Vagina (tissue), 2 donors: ENCODE measurements at regions of chr11 and their contacts with region 1.

Region 1: GRCh38 chr11:69088676-69089146 is 40.0 kb downstream of the TPCN2 start:
- DNase-seq: no peak
- H3K4me3 ChIP-seq: no peak overlapping the region
- H3K27ac ChIP-seq: no peak overlapping the region
- H3K4me1 ChIP-seq: peaks cover 6% of the 10 kb centered on the region
- H3K27me3 ChIP-seq: no peaks in the 10 kb centered on the region
- CTCF ChIP-seq: peak; percentile 37 to 86 (median 73)
- POLR2A ChIP-seq: no peak

Region 2: DNA sequence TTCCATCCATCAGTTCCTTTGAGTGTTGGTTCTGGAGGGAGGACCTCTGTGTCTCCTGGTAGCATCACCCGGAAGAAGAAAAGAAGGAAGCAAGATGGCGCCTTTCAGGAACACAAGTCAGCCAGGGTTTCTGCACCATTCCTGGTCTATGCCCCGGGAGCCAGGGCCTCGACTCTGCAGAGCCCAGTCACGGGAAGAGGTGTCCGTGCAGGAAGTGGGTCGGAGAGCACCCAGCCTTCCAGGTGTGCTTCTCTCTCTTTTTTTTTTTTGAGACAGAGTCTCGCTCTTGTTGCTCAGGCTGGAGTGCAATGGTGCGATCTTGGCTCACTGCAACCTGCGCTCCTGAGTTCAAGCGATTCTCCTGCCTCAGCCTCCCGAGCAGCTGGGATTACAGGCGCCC is 206.3 kb before region 1 on chr11:
- intact Hi-C with region 1: no loop called
- DNase-seq: no peak
- H3K4me3 ChIP-seq: no peak overlapping the region
- H3K27ac ChIP-seq: no peak overlapping the region
- H3K4me1 ChIP-seq: no peaks in the 10 kb centered on the region
- H3K27me3 ChIP-seq: no peaks in the 10 kb centered on the region
- CTCF ChIP-seq: no peak
- POLR2A ChIP-seq: no peak

Region 3: GRCh38 chr11:68903288-68904247 is 185.1 kb before region 1 on chr11 and contains the starts of genes IGHMBP2 and MRPL21:
- intact Hi-C with region 1: loop called (anchors 1 kb)
- DNase-seq: no peak
- H3K4me3 ChIP-seq: peak within 1 kb of the TSS; percentile 72 to 80
- H3K27ac ChIP-seq: peak within 1 kb of the TSS; percentile 87
- H3K4me1 ChIP-seq: peaks cover 38% of the 10 kb centered on the region
- H3K27me3 ChIP-seq: no peaks in the 10 kb centered on the region
- CTCF ChIP-seq: no peak
- POLR2A ChIP-seq: peak in 1 of 2 donors; percentile 37
- total RNA-seq, gene IGHMBP2: 8.3 TPM
- total RNA-seq, gene MRPL21: 68.5 TPM

Region 4: DNA sequence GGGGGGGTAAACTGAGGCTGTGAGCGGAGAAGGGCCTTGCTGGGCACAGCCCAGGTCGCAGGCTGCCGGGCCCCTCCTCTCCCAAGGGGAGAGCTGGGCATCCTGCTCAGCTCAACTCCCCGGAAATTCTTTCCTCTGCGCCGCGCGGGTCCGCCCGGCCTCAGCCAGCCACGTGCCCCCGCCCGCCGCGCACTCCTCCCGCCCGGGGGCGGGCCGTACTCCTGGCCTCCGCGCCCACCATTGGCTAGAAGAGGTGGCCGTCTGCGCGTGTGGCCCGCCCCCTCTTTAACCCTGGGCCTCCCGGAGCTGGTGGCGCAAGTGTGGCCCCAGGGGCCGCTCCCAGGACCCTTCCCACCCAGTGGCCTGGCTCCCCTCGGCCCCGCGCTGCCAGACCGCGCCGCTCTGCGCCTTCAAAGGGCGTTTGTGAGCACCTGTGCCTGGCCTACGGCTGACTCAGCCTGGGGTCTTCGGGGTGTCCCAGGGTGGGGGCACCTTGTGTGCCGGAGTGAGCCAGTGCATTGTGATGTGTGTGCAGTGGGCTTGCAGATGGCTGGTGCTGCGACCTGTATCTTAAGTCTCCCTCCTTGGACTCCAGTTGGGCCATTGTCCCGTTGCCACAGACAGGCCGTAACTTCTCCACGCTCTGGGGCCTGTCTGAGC is 77.6 kb before region 1 on chr11:
- intact Hi-C with region 1: loop called (anchors 5 kb)
- DNase-seq: no peak
- H3K4me3 ChIP-seq: peak overlapping the region; percentile 62 to 63
- H3K27ac ChIP-seq: peak overlapping the region; percentile 95
- H3K4me1 ChIP-seq: peaks cover 53% of the 10 kb centered on the region
- H3K27me3 ChIP-seq: no peaks in the 10 kb centered on the region
- CTCF ChIP-seq: no peak
- POLR2A ChIP-seq: peak in 1 of 2 donors; percentile 81